PC-3 (cell line): ENCODE measurements at regions of chr7 and their contacts with region 1.

Region 1: GRCh38 chr7:123367484-123368122 is 166.8 kb downstream of the IQUB start:
- DNase-seq: peak; percentile 63
- ATAC-seq: peak; percentile 71
- H3K4me3 ChIP-seq: no peak overlapping the region
- H3K27ac ChIP-seq: no peak overlapping the region
- H3K4me1 ChIP-seq: no peaks in the 10 kb centered on the region
- H3K27me3 ChIP-seq: no peaks in the 10 kb centered on the region
- CTCF ChIP-seq: peak; percentile 71

Region 2: DNA sequence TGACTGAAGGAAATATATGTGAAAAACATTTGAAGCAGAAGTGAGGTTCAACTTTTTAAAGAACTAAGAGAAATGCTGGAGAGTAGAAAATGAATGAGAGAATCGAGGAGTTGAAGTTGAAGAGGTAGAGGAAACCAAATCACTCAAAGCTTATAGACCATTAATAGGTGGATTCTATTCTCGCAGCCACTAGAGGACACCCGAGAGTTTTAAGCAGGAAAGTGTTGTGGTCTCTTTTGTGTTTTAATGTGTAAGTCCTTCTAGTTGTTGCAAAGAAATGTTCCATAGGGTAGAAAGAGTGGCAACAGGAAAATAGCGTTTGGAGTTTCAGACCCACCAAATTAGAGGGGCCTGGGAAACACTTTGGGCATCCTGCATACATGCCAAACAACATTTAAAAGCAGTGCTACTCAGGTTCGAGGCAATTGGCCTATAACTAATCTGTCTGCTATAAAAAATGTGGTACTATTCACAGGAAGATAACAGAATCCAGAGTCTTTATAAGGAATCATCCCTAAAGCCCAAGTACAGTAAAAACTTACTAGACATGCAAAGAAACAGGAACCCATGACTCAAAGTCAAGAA is 296.8 kb before region 1 on chr7:
- CTCF ChIA-PET with region 1: interaction called, 4 read pairs
- POLR2A ChIA-PET with region 1: no interaction called
- intact Hi-C with region 1: loop called (anchors 10 kb)
- DNase-seq: peak; percentile 49
- ATAC-seq: peak; percentile 43
- H3K4me3 ChIP-seq: no peak overlapping the region
- H3K27ac ChIP-seq: no peak overlapping the region
- H3K4me1 ChIP-seq: no peaks in the 10 kb centered on the region
- H3K27me3 ChIP-seq: peaks cover 14% of the 10 kb centered on the region; the same call in 1 of the 2 replicates
- CTCF ChIP-seq: peak; percentile 72

Region 3: GRCh38 chr7:123208793-123209192 is 158.8 kb before region 1 on chr7:
- CTCF ChIA-PET with region 1: interaction called, 15 read pairs
- POLR2A ChIA-PET with region 1: no interaction called
- intact Hi-C with region 1: loop called (anchors 2 kb)
- DNase-seq: peak; percentile 35
- ATAC-seq: no peak
- H3K4me3 ChIP-seq: no peak overlapping the region
- H3K27ac ChIP-seq: no peak overlapping the region
- H3K4me1 ChIP-seq: no peaks in the 10 kb centered on the region
- H3K27me3 ChIP-seq: no peaks in the 10 kb centered on the region
- CTCF ChIP-seq: peak; percentile 58